MCF 10A (cell line): ENCODE measurements at regions of chr19 and their contacts with region 1.

Region 1: DNA sequence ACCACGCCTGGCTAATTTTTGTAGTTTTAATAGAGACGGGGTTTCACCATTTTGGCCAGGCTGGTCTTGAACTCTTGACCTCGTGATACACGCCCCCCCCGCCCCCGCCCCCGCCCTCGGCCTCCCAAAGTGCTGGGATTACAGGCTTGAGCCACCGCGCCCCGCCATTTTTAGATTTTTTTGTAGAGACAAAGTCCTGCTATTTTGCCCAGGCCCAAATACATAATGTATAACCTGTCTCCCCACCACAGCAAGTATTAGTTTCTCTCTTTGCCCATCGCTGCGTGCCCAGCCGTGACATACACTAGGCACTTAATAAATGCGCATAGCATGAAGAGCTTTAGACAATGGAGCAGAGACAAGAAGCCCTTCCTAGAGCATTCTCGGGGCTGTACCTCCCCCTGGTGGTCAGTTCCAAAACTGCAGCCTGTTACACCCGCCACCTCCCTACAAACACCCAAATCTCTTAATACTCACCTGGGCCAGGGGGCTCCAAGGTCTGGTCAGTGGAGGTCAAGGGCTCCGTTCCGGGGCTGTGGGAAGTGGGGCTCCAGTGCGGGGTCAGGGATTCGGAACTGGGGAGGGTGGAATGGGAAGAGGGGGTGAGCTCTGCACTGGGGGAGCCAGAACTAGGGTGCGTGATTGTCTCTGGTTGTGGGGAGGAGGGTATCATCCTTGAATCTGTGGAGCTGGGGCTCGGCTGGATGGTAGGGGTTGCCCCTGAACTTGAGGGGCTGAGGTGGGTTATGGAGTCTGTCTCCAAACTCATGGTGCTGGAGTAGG is 22.5 kb downstream of the IQCN start:
- DNase-seq: peak; percentile 76
- H3K4me3 Mint-ChIP-seq: no peak overlapping the region
- H3K27ac Mint-ChIP-seq: no peak overlapping the region
- H3K4me1 Mint-ChIP-seq: no peaks in the 10 kb centered on the region
- H3K27me3 Mint-ChIP-seq: no peaks in the 10 kb centered on the region
- CTCF ChIP-seq: peak; percentile 89

Region 2: GRCh38 chr19:18007044-18007916 is 244.5 kb before region 1 on chr19:
- CTCF ChIA-PET with region 1: interaction called, 3 read pairs
- POLR2A ChIA-PET with region 1: no interaction called
- intact Hi-C with region 1: loop called (anchors 5 kb)
- DNase-seq: peak; percentile 80
- H3K4me3 Mint-ChIP-seq: peak overlapping the region; percentile 69
- H3K27ac Mint-ChIP-seq: no peak overlapping the region
- H3K4me1 Mint-ChIP-seq: peaks cover 14% of the 10 kb centered on the region
- H3K27me3 Mint-ChIP-seq: no peaks in the 10 kb centered on the region
- CTCF ChIP-seq: peak; percentile 99

Region 3: GRCh38 chr19:18117692-18118378 is 133.9 kb before region 1 on chr19:
- CTCF ChIA-PET with region 1: interaction called, 47 read pairs
- POLR2A ChIA-PET with region 1: no interaction called
- intact Hi-C with region 1: loop called (anchors 1 kb)
- DNase-seq: peak; percentile 70
- H3K4me3 Mint-ChIP-seq: peak overlapping the region; percentile 77
- H3K27ac Mint-ChIP-seq: peak overlapping the region; percentile 63
- H3K4me1 Mint-ChIP-seq: peaks cover 15% of the 10 kb centered on the region
- H3K27me3 Mint-ChIP-seq: no peaks in the 10 kb centered on the region
- CTCF ChIP-seq: no peak

Region 4: DNA sequence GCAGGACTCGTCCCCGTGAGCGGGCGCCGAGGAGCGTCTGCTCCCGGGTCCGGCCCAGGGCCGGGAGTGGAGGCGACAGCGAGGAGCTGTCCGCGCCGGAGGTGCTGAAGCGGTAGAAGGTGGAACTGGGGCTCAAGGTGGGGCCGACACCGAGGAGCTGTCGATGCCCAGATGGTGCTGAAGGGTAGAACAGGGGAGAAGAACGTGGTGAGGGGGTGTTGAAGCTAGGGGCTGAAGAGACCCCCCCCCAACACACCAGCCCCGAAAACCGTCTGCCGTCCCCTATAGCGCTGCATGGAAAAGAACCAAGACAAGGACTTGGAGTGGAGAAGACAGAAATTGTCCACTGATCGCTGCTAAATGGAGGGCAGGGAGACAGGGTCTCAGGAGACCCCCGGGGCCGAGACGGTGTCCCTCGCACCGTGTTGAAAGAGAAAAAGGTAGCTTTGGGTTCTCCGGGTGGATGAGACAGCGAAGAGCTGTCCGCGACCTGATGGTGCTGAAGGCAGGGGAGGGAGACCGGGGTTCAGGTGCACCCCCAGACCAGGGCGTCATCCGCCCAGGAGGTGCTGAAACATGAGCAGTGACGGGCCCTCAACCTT is 18.5 kb before region 1 on chr19:
- CTCF ChIA-PET with region 1: interaction called, 13 read pairs
- POLR2A ChIA-PET with region 1: no interaction called
- intact Hi-C with region 1: no loop called
- DNase-seq: peak; percentile 38
- H3K4me3 Mint-ChIP-seq: no peak overlapping the region
- H3K27ac Mint-ChIP-seq: no peak overlapping the region
- H3K4me1 Mint-ChIP-seq: no peaks in the 10 kb centered on the region
- H3K27me3 Mint-ChIP-seq: peaks cover 42% of the 10 kb centered on the region
- CTCF ChIP-seq: no peak

Region 5: GRCh38 chr19:18274781-18275356 is 23.1 kb after region 1 on chr19:
- CTCF ChIA-PET with region 1: interaction called, 13 read pairs
- POLR2A ChIA-PET with region 1: interaction called, 5 read pairs
- intact Hi-C with region 1: no loop called
- DNase-seq: peak; percentile 94
- H3K4me3 Mint-ChIP-seq: peak overlapping the region; percentile 38
- H3K27ac Mint-ChIP-seq: peak overlapping the region; percentile 79
- H3K4me1 Mint-ChIP-seq: peaks cover 23% of the 10 kb centered on the region
- H3K27me3 Mint-ChIP-seq: no peaks in the 10 kb centered on the region
- CTCF ChIP-seq: peak; percentile 3